ENCODE measurements at regions of chr7 and their contacts with region 1.

Region 1: DNA sequence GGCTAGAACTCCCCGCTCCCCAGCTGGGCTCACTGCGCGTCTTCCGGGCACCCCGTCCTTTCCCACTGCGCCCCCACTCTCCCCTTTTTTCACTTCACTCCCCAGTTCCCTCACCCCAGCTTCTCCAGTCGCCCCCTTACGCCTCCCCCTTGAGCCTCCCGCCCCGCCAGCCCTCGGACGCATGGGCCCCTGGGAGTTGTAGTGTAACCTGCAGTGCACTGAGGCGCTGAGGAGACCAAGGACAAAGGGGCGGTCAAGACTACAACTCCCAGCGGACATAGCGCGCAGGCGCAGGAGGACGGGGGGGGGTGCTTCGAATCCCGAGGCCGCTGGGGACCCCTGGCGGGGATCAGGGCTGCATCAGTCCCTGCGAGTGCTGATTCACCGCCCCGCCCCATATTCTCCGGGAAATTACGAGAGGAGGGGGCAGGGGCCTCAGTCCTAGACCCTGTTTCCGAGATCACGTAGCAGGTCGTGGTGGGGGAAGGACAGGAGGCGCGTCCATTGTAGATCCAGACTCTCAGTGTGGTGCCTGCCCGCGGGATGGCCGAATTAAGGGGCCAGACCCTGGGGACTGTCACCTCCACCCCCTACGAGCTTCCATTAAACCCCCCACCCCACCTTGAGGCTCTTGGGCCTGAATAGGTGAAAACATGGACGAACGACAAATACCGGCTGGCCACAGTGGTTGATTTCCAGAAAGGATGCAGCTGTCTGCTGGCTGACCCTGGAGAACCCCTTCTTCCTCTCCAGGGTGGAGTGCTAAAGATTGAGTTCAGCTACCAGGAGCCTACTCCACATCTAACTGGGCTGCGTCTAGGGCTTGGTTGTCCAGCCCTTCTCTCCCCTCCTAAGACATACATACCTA is 554 bp upstream of the YWHAG start:
- DNase-seq: peak; percentile 97
- H3K4me3 ChIP-seq: peak overlapping the region; percentile 96 to 98
- H3K27ac ChIP-seq: peak overlapping the region; percentile 99
- H3K4me1 ChIP-seq: peaks cover 7% of the 10 kb centered on the region
- H3K27me3 ChIP-seq: no peaks in the 10 kb centered on the region
- CTCF ChIP-seq: peak; percentile 59 to 95 (median 84)
- POLR2A ChIP-seq: peak; percentile 71

Region 2: GRCh38 chr7:74371381-74372341 is 1987.7 kb before region 1 on chr7:
- intact Hi-C with region 1: no loop called
- DNase-seq: no peak
- H3K4me3 ChIP-seq: no peak overlapping the region
- H3K27ac ChIP-seq: no peak overlapping the region
- H3K4me1 ChIP-seq: no peaks in the 10 kb centered on the region
- H3K27me3 ChIP-seq: no peaks in the 10 kb centered on the region
- CTCF ChIP-seq: no peak
- POLR2A ChIP-seq: no peak

Region 3: DNA sequence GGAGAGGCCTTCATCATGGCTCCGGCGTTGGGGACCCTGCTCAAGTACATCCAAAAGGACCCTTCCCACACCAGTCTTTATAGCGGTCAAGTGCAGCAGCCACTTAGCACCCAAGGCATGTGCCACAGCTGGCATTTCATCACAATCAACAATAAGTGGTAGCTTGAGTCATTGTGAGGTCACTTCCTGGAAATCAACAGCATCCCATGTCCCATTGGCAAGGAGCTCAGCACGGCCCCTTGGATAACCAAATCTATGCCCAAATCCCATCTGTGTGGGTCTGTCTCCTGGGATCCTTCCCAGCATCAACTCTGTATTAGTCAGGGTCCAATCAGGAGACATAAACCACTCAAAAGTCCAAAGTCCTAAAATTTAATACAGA is 284.4 kb before region 1 on chr7:
- intact Hi-C with region 1: no loop called
- DNase-seq: no peak
- H3K4me3 ChIP-seq: no peak overlapping the region
- H3K27ac ChIP-seq: no peak overlapping the region
- H3K4me1 ChIP-seq: peaks cover 1% of the 10 kb centered on the region
- H3K27me3 ChIP-seq: no peaks in the 10 kb centered on the region
- CTCF ChIP-seq: no peak
- POLR2A ChIP-seq: no peak

Region 4: GRCh38 chr7:76314042-76314721 is 45.2 kb before region 1 on chr7:
- intact Hi-C with region 1: loop called (anchors 5 kb)
- DNase-seq: peak; percentile 95
- H3K4me3 ChIP-seq: no peak overlapping the region
- H3K27ac ChIP-seq: peak overlapping the region in 1 of 2 donors; percentile 35
- H3K4me1 ChIP-seq: peaks cover 5% of the 10 kb centered on the region
- H3K27me3 ChIP-seq: no peaks in the 10 kb centered on the region
- CTCF ChIP-seq: peak; percentile 100
- POLR2A ChIP-seq: no peak